Activated CD4-positive, alpha-beta T cell treated with anti-CD3 and anti-CD28 coated beads, Interleukin-2, amount 10 ng/mL, durations not matched to agents 24 days and 14 days (primary cell): ENCODE measurements at regions of chr6 and their contacts with region 1.

Region 1: DNA sequence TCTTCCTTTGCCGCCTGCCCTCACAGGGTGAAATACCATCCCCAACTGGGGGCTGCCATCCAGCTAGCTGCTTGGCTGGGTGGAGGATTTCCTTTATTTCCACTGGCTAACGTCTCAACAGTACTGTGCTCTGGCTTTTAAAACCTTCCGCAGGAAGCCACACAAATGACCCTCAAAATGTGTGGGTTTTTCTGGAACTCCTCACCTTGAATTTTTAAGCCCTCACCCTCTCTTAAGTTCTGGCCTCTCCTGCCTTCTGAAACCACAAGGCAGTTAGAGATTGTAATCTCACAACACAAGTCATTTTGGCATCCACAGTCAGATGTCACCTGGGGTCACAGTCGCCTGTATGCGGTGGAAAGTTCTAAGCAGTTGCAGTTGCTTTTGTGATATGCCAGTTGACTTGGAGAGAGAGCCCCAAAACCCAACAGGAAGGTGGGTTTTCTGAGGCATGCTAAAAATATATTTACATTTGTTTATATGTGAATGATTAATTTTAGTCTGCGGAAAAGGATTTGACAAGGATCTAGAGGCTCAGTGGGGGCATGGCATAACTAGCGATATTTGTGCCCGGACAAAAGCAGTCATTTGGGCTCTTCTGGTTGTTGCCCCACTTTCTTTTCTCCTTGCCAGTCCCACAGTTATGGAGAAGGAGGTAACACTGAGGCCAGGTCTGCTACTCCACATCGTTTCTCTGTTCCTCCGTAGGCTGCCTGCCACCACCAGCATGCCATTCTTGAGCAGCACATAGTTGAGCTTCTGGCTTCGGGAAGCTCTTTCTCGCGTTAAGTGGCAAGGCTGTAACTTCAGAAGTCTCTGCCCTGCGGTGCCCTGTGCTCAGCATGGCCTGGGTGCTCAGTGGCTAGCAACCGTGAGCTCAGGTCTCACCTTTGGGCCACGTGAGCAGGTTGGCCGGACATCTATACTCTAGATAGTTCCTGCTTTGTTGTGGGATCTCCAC is 335.3 kb downstream of the CD83 start:
- DNase-seq: peak; percentile 90
- H3K4me3 Mint-ChIP-seq: peak overlapping the region; percentile 65
- H3K27ac Mint-ChIP-seq: peak overlapping the region; percentile 95
- H3K4me1 Mint-ChIP-seq: peaks cover 81% of the 10 kb centered on the region
- H3K27me3 Mint-ChIP-seq: no peaks in the 10 kb centered on the region

Region 2: GRCh38 chr6:14210663-14211561 is 241.9 kb before region 1 on chr6:
- intact Hi-C with region 1: loop called (anchors 2 kb)
- DNase-seq: peak; percentile 98
- H3K4me3 Mint-ChIP-seq: peak overlapping the region; percentile 85
- H3K27ac Mint-ChIP-seq: peak overlapping the region; percentile 85
- H3K4me1 Mint-ChIP-seq: peaks cover 21% of the 10 kb centered on the region
- H3K27me3 Mint-ChIP-seq: no peaks in the 10 kb centered on the region

Region 3: DNA sequence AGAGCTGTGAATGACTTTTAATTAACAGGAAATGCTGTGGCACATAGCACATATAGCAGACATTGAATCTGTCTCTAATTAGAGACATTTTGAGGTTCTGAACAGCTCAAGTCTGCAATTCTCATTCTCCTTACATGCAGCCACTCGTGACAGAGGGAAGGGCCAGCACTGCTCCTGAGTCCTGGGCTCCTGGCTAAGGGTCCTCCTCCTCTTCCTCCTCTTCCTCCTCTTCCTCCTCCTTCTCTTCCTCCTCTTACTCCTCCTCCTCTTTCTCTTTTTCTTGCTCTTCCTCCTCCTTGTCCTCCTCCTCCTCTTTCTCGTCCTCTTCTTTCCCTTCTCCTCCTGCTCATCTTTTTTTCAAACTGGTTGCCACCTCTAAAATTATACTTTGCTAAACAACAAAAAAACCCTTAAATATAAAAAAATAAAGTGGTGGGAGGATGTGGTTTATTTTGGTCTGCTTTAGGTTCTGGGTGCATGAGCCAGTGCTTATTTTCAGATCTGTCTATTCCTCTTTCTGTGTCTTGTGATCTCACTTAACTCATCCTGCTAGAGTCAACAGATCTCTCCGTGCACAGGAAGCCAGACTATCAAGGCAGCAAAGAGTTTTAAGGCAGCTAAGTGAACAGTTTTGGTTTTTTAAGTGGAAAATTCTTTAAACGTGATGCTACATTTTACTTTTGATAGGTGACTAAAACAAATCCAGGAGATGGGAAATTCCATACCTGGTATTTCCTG is 176.0 kb before region 1 on chr6:
- intact Hi-C with region 1: loop called (anchors 2 kb)
- DNase-seq: peak; percentile 84
- H3K4me3 Mint-ChIP-seq: peak overlapping the region; percentile 71
- H3K27ac Mint-ChIP-seq: peak overlapping the region; percentile 92
- H3K4me1 Mint-ChIP-seq: peaks cover 46% of the 10 kb centered on the region
- H3K27me3 Mint-ChIP-seq: no peaks in the 10 kb centered on the region

Region 4: DNA sequence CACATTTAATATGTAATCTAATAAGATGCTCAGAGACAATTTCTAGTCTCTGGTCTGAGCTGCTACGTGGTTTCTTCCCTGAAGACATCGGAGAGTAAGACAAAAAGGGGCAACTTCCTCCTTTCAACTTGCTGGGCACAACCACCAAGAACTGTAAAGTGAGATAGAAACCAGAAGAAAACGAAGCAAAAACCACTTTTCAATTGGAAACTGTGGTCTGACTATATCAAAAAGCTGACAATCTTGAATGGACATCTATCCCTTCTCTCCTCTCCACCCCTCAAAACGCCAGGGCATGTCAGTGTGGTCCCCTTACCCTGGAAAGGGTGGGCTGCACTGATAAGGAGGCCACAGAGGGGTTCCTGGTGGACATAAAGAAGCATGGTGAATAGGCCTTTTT is 66.2 kb before region 1 on chr6:
- intact Hi-C with region 1: no loop called
- DNase-seq: no peak
- H3K4me3 Mint-ChIP-seq: no peak overlapping the region
- H3K27ac Mint-ChIP-seq: no peak overlapping the region
- H3K4me1 Mint-ChIP-seq: peaks cover 21% of the 10 kb centered on the region
- H3K27me3 Mint-ChIP-seq: no peaks in the 10 kb centered on the region

Region 5: DNA sequence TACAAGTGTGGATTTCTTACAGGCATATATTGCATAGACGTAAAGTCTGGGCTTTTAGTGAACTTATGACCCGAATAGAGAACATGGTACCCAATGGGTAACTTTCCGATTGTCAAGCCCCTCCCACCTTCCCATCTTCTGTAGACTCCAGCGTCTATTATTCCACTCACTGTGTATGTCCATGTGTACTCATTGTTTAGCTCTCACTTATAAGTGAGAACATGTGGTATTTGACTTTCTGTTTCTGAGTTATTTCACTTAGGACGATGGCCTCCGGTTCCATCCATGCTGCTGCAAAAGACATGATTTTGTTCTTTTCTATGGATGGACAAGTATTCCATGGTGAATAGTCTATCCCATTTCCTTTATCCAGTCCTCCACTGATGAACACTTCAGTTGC is 28.9 kb before region 1 on chr6:
- intact Hi-C with region 1: loop called (anchors 1 kb)
- DNase-seq: no peak
- H3K4me3 Mint-ChIP-seq: peak overlapping the region; percentile 23
- H3K27ac Mint-ChIP-seq: peak overlapping the region; percentile 88
- H3K4me1 Mint-ChIP-seq: peaks cover 25% of the 10 kb centered on the region
- H3K27me3 Mint-ChIP-seq: no peaks in the 10 kb centered on the region

Region 6: DNA sequence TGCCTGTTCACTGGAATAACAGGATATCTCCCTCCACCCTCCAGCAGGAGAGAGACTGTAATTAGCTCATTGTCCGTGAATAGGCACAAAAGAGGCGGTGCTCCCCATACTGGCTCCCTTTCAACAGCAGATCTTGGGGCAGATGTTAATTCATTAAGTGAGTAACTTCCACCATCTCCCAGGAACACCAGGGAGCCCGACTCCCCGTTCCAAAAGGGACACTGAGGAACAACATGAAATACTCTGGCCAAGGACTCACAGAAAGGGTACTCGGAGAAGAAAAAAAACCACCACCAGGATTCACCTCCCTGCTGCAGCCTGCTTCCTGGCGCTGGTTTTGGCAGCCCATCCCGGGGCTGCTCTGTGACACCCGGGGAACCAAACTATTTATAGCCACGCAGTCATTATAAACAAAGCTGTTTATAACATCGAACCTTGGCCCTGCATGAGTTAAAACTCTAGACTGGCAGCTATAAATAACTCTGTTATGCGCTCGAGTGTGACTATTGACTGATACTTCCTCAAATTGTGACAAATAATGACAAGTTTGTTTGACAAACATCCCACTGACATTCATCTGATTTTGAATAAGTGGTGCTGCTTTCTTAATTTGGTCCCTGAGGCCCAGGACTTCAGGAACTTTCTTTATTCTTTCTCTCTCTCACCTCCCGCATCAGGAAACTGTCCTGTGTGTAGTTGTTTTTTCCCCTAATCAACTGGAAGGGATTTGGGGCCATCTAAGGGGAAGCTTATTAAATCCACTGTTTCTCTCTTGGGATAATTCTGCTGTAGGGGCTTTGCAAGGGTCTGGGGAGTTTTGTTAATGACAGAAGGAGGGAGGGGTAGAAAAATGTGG is 186.3 kb after region 1 on chr6:
- intact Hi-C with region 1: loop called (anchors 10 kb)
- DNase-seq: no peak
- H3K4me3 Mint-ChIP-seq: no peak overlapping the region
- H3K27ac Mint-ChIP-seq: peak overlapping the region; percentile 52
- H3K4me1 Mint-ChIP-seq: peaks cover 58% of the 10 kb centered on the region
- H3K27me3 Mint-ChIP-seq: peaks cover 4% of the 10 kb centered on the region

Region 7: DNA sequence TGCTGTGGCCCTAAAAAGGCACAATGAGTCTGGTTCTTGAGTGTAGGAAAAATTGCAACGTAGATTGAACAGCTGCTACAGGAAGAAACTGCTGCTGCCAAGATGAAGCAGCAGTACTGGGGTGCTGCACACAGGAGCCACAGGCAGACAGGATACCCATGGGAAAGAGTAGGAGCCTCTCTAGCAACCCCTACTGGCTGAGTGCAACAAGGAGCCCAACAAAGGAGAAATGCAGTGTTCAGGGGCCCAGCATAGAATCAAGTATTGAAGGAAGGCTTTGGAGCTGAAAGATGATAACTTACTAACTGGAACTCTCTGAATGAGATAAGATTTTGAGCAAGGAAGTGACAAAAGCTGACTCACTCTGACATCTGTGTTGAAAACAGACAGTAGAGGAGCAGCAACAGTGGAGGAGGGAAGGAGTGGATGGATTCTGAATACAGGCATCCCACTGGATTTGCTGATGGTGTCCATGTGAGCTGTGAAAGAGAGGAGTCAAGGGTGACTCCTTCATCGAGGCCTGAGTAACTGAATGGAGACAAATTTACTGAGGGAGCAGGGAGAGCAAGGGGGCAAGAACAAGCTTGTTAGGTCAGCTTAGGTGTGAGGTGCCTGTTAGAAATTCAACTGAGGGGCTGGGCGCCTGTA is 258.3 kb after region 1 on chr6:
- intact Hi-C with region 1: loop called (anchors 2 kb)
- DNase-seq: peak; percentile 90
- H3K4me3 Mint-ChIP-seq: peak overlapping the region; percentile 24
- H3K27ac Mint-ChIP-seq: peak overlapping the region; percentile 95
- H3K4me1 Mint-ChIP-seq: peaks cover 42% of the 10 kb centered on the region
- H3K27me3 Mint-ChIP-seq: no peaks in the 10 kb centered on the region